A673 (cell line): ENCODE measurements at regions of chr17 and their contacts with region 1.

Region 1: DNA sequence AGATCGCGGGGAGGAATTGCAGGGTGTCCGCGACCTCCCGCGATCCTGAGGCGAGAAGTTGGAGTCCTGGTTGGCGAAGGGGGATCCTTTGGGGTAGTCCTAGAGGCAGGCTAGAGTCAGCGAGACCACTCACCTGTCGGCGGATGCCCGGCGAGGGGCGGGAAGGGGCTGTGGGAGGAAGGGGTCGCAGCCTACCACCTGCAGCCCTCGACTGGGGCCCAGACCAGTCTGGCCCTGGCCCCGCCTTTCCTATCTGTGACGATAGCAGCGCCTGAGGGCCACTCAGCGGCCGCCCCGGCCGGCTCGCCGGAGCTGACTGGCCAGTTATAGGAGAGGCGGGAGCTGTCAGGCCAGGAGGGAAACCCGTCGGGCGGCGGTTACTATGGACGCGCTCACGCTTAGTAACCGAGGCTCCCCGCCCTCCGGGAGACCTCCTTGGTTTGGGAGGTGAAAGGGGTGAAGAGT is at the start of gene TEKT3:
- DNase-seq: no peak
- H3K4me3 ChIP-seq: no peak within 1 kb of the TSS
- H3K27ac ChIP-seq: no peak within 1 kb of the TSS
- H3K4me1 ChIP-seq: no peaks in the 10 kb centered on the region
- H3K27me3 ChIP-seq: peaks cover 31% of the 10 kb centered on the region
- CTCF ChIP-seq: no peak
- total RNA-seq, gene TEKT3: not detected in 2 replicates

Region 2: DNA sequence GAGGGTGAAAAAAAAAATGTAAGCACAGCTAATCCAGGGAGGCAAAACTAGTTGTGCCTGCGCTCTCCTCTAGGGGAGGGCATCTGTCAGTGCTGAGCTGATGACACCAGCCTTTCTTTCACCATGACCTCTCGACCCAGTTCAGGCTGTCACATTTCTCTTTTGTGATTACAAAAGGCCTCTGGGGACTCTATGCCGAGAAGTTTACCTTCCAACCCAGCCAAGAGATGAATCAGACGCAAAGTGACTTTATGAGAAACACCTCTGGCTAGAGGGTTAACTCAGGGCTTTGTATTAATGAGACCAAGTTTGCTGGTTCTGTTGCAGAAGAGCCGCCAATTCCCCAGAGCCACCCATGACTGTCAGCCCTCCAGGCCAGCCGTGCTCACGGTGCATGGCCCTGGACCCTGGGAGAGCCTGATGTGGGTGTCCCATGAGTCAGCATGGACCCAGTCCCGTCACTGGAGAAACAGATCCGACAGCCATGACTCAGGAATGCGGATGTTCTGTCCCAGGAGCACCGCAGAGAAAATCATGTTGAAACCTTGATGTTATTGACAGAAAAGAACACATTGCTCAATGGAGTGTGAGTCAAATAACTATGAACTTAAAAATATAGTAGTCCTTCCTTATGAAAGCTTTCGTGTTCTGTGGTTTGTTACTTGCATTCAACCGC is 603.3 kb before region 1 on chr17:
- CTCF ChIA-PET with region 1: no interaction called
- POLR2A ChIA-PET with region 1: no interaction called
- intact Hi-C with region 1: loop called (anchors 10 kb)
- DNase-seq: no peak
- H3K4me3 ChIP-seq: no peak overlapping the region
- H3K27ac ChIP-seq: no peak overlapping the region
- H3K4me1 ChIP-seq: no peaks in the 10 kb centered on the region
- H3K27me3 ChIP-seq: no peaks in the 10 kb centered on the region
- CTCF ChIP-seq: no peak

Region 3: GRCh38 chr17:15091825-15092224 is 249.6 kb before region 1 on chr17:
- CTCF ChIA-PET with region 1: no interaction called
- POLR2A ChIA-PET with region 1: no interaction called
- intact Hi-C with region 1: no loop called
- DNase-seq: peak; percentile 1
- H3K4me3 ChIP-seq: no peak overlapping the region
- H3K27ac ChIP-seq: no peak overlapping the region
- H3K4me1 ChIP-seq: no peaks in the 10 kb centered on the region
- H3K27me3 ChIP-seq: no peaks in the 10 kb centered on the region
- CTCF ChIP-seq: no peak

Region 4: GRCh38 chr17:15361151-15361550 is 19.7 kb after region 1 on chr17:
- CTCF ChIA-PET with region 1: no interaction called
- POLR2A ChIA-PET with region 1: no interaction called
- intact Hi-C with region 1: no loop called
- DNase-seq: no peak
- H3K4me3 ChIP-seq: no peak overlapping the region
- H3K27ac ChIP-seq: no peak overlapping the region
- H3K4me1 ChIP-seq: no peaks in the 10 kb centered on the region
- H3K27me3 ChIP-seq: no peaks in the 10 kb centered on the region
- CTCF ChIP-seq: no peak